Activated naive CD4-positive, alpha-beta T cell treated with anti-CD3 and anti-CD28 coated beads for 36 hours (primary cell): ENCODE measurements at regions of chr11 and their contacts with region 1.

Region 1: GRCh38 chr11:134275534-134276395 is at the start of gene GLB1L3:
- DNase-seq: peak; percentile 83
- H3K4me3 Mint-ChIP-seq: peak within 1 kb of the TSS; percentile 95
- H3K27ac Mint-ChIP-seq: peak within 1 kb of the TSS; percentile 98
- H3K4me1 Mint-ChIP-seq: peaks cover 36% of the 10 kb centered on the region
- H3K27me3 Mint-ChIP-seq: peaks cover 6% of the 10 kb centered on the region
- total RNA-seq, gene GLB1L3: 11.8 to 13.2 TPM

Region 2: DNA sequence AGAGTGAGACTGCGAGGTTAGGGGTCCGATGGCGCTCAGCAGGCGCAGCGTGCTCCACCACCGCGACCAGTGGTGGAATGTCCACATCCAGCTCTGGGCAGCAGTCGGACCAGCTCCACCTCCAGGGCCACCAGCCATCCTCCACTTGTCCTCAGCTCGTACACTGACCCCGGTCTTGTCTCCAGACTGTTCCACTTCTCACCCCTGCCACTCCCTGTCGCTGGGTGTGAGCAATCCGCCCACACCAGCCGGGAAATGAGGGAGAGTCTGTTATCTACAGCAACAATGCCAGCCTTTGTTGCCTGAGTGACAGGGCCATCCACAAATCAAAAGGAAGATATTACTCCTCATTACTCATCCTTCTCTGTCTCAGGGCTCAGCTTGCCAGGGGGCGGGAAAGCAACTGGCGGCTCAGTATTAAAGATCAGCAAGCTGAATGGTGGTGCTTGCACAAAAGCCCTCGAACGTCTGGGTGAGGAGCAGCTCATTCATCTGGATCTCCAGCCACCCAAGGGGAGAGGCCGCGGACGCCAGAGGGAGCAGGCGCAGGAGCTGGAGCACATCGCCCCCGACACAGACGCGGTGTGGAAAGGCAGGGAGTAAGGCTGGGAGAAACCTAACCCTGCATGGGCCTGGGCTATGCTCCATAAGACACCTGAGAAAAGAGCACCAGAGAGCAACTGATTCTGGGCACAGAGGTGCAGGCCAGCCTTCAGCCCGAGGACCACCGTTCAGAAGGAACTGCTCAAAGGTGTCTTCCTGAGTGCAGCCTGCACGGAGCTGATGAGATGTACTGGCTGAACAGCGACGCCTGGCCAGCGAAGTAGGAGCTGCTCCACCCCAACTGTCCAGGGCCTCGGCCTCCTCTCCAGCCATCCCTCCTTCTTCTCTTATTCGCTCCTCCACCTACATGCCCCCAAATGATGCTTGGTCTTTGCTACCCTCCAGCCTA is 340.9 kb before region 1 on chr11:
- CTCF ChIA-PET with region 1: no interaction called
- intact Hi-C with region 1: no loop called
- DNase-seq: no peak
- H3K4me3 Mint-ChIP-seq: no peak overlapping the region
- H3K27ac Mint-ChIP-seq: no peak overlapping the region
- H3K4me1 Mint-ChIP-seq: peaks cover 7% of the 10 kb centered on the region
- H3K27me3 Mint-ChIP-seq: no peaks in the 10 kb centered on the region

Region 3: GRCh38 chr11:134253188-134253993 is 22.4 kb before region 1 on chr11 and contains the starts of genes ACAD8 and THYN1:
- CTCF ChIA-PET with region 1: interaction called, 7 read pairs
- intact Hi-C with region 1: loop called (anchors 1 kb)
- DNase-seq: peak; percentile 97
- H3K4me3 Mint-ChIP-seq: peak within 1 kb of the TSS; percentile 90
- H3K27ac Mint-ChIP-seq: peak within 1 kb of the TSS; percentile 54
- H3K4me1 Mint-ChIP-seq: peaks cover 26% of the 10 kb centered on the region
- H3K27me3 Mint-ChIP-seq: no peaks in the 10 kb centered on the region
- total RNA-seq, gene ACAD8: 14.8 to 17.6 TPM
- total RNA-seq, gene THYN1: 85.6 to 92.6 TPM

Region 4: GRCh38 chr11:134261626-134262488 is 13.9 kb before region 1 on chr11:
- CTCF ChIA-PET with region 1: interaction called, 61 read pairs
- intact Hi-C with region 1: loop called (anchors 1 kb)
- DNase-seq: peak; percentile 52
- H3K4me3 Mint-ChIP-seq: no peak overlapping the region
- H3K27ac Mint-ChIP-seq: no peak overlapping the region
- H3K4me1 Mint-ChIP-seq: no peaks in the 10 kb centered on the region
- H3K27me3 Mint-ChIP-seq: no peaks in the 10 kb centered on the region

Region 5: DNA sequence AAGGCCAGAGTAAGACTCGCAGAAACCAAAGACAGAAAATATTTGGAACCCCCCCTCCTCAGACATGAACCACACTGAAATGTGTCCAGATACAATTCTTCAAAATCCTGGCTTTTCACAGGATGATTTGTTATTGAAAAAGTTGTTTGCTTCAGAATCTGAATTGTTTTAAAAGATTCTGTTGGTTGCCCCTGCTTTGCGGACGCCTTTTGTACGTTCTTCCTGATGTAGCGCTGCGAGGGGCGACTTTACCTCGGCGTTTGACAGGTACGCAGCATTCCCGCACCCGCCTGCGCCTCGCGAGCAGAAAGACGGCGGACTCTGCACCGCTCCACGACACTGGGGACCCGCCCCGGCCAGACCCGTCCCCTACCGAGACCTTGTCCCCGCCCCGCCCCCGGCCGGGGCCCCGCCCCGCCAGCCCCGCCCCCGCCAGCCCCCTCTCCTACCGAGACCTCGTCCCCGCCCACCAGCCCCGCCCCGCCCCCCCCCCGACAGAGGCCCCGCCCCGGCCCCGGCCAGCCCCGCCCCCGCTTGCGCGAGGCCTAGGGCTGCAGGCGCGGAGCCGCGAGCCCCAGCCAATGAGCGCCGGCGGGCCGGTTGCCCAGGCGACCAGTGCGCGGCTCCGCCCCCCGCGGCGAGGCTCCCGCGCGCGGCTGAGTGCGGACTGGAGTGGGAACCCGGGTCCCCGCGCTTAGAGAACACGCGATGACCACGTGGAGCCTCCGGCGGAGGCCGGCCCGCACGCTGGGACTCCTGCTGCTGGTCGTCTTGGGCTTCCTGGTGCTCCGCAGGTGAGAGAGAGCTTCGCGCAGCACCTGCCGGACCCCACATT is 55.8 kb after region 1 on chr11 and contains the start of gene GLB1L2:
- CTCF ChIA-PET with region 1: interaction called, 8 read pairs
- intact Hi-C with region 1: loop called (anchors 1 kb)
- DNase-seq: peak; percentile 69
- H3K4me3 Mint-ChIP-seq: peak within 1 kb of the TSS; percentile 80
- H3K27ac Mint-ChIP-seq: no peak within 1 kb of the TSS
- H3K4me1 Mint-ChIP-seq: peaks cover 7% of the 10 kb centered on the region
- H3K27me3 Mint-ChIP-seq: peaks cover 9% of the 10 kb centered on the region
- total RNA-seq, gene GLB1L2: 9.3 to 11.0 TPM

Region 6: GRCh38 chr11:134343646-134344045 is 67.9 kb after region 1 on chr11:
- CTCF ChIA-PET with region 1: no interaction called
- intact Hi-C with region 1: loop called (anchors 1 kb)
- DNase-seq: no peak
- H3K4me3 Mint-ChIP-seq: no peak overlapping the region
- H3K27ac Mint-ChIP-seq: no peak overlapping the region
- H3K4me1 Mint-ChIP-seq: no peaks in the 10 kb centered on the region
- H3K27me3 Mint-ChIP-seq: no peaks in the 10 kb centered on the region